ENCODE measurements at regions of chr18 and their contacts with region 1.

Region 1: DNA sequence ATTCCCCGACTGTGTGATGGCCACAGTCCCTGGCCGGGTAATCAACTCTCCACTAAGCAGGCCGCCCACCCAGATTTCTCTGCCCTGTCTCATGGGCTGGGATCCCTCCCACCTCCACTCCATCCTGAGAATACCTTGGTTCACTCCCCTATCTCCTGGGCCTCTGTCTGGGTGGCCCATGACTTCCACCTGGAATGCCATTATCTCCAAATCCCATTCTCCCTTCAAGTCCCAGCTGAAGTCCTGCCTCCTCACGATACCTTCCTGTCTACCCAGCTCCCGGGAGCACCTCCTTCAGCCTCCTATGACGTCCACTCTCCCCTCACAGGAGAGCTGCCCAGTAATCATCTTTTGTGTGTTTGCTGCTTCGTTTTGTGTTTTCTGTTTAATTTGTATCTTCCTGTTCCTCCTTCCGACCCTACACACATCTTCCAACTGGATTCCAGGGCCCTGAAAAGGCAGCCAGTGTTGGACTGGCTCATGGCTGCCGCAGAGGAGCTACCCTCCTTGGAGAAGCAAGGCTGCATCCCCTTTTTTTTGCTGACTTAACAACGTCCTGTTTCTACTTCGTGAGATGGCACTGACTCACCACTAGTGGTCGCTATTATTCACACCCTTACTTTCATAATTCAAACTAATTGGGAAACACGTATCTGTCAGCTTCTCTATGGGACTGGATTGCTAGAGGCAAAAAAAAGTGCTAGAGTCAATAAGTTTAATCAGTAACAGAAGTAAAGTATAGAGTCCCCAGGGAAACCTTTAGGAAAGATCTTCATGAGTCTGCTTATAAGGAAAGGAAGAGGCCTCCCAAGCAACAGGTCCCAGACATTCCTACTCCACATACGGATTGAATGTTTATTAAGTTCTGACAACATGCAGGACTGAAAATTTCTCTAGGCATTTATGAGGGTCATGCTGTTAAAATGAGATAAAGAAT is 171.9 kb upstream of the GATA6 start:
- DNase-seq: peak; percentile 70 to 74
- H3K4me3 ChIP-seq: no peak overlapping the region
- H3K4me3 Mint-ChIP-seq: peak overlapping the region; percentile 43
- H3K27ac Mint-ChIP-seq: peak overlapping the region; percentile 96
- H3K4me1 ChIP-seq: peaks cover 97% of the 10 kb centered on the region
- H3K4me1 Mint-ChIP-seq: peaks cover 51% of the 10 kb centered on the region
- H3K27me3 ChIP-seq: no peaks in the 10 kb centered on the region
- H3K27me3 Mint-ChIP-seq: no peaks in the 10 kb centered on the region
- CTCF ChIP-seq: peak; percentile 75 to 78

Region 2: DNA sequence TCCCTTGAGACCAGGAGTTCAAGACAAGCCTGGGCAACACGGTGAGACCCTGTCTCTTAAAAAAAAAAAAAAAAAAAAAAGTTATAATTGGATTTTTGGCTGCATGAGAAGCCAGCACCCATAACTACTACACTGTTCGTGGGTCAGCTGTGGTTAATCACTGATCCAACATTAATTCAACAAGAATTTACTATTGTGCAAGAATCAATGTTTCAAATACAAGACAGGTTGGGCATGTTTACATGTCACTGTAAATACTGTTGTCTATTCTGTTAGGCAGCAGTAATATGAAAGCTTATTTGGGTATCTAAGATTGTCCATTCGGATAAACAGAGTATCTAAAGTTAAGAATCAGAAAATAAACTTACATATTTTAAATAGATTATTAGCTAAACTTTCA is 459.2 kb before region 1 on chr18:
- CTCF ChIA-PET with region 1: no interaction called
- POLR2A ChIA-PET with region 1: no interaction called
- intact Hi-C with region 1: no loop called
- DNase-seq: no peak
- H3K4me3 ChIP-seq: no peak overlapping the region
- H3K4me3 Mint-ChIP-seq: no peak overlapping the region
- H3K27ac Mint-ChIP-seq: no peak overlapping the region
- H3K4me1 ChIP-seq: no peaks in the 10 kb centered on the region
- H3K4me1 Mint-ChIP-seq: no peaks in the 10 kb centered on the region
- H3K27me3 ChIP-seq: no peaks in the 10 kb centered on the region
- H3K27me3 Mint-ChIP-seq: no peaks in the 10 kb centered on the region
- CTCF ChIP-seq: no peak

Region 3: DNA sequence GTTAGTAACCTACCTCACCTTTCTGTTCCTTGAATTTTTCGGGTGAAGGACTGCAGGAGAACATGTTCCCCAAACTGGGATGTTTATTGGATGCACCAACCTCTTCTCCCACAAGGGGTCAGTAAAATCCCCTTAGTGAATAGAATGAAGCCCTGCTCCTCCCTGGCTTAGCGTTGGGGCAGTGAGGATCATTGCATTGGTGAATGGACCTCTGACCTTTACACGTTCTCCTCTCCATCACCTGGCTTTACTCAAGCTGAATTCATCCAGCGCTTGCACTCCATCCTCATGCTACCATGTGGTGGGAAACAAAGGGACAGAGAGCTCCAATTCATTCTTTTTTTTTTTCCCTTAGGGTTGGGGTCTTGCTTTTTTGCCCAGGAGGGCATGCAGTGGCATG is 99.7 kb before region 1 on chr18:
- CTCF ChIA-PET with region 1: no interaction called
- POLR2A ChIA-PET with region 1: no interaction called
- intact Hi-C with region 1: no loop called
- DNase-seq: peak; percentile 67 to 80
- H3K4me3 ChIP-seq: no peak overlapping the region
- H3K4me3 Mint-ChIP-seq: no peak overlapping the region
- H3K27ac Mint-ChIP-seq: no peak overlapping the region
- H3K4me1 ChIP-seq: no peaks in the 10 kb centered on the region
- H3K4me1 Mint-ChIP-seq: peaks cover 11% of the 10 kb centered on the region
- H3K27me3 ChIP-seq: no peaks in the 10 kb centered on the region
- H3K27me3 Mint-ChIP-seq: no peaks in the 10 kb centered on the region
- CTCF ChIP-seq: peak; percentile 66 to 82

Region 4: DNA sequence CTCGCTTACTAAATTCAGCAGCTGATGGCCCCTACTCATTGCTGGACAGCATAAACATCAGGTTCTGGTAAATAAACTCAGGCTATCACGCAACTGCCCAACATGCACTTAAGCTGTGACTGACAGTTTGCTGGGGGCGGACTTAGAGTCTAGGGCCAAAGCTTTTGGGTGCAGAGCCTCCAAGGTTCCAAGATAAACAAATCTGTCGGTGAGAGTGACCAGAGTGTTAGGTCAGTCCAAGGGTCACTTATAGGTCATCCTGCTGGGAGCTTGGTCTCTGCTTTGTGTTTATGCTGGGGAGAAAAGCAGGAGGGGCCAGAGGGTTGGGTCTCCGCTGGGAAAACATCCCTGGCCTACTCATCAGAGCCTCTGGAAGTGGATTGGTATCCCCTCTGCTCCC is 16.7 kb before region 1 on chr18:
- CTCF ChIA-PET with region 1: interaction called, 3 read pairs
- POLR2A ChIA-PET with region 1: interaction called, 4 read pairs
- intact Hi-C with region 1: loop called (anchors 2 kb)
- DNase-seq: peak; percentile 82 to 89
- H3K4me3 ChIP-seq: no peak overlapping the region
- H3K4me3 Mint-ChIP-seq: peak overlapping the region; percentile 66
- H3K27ac Mint-ChIP-seq: peak overlapping the region; percentile 86
- H3K4me1 ChIP-seq: peaks cover 45% of the 10 kb centered on the region
- H3K4me1 Mint-ChIP-seq: peaks cover 37% of the 10 kb centered on the region
- H3K27me3 ChIP-seq: no peaks in the 10 kb centered on the region
- H3K27me3 Mint-ChIP-seq: no peaks in the 10 kb centered on the region
- CTCF ChIP-seq: no peak

Region 5: DNA sequence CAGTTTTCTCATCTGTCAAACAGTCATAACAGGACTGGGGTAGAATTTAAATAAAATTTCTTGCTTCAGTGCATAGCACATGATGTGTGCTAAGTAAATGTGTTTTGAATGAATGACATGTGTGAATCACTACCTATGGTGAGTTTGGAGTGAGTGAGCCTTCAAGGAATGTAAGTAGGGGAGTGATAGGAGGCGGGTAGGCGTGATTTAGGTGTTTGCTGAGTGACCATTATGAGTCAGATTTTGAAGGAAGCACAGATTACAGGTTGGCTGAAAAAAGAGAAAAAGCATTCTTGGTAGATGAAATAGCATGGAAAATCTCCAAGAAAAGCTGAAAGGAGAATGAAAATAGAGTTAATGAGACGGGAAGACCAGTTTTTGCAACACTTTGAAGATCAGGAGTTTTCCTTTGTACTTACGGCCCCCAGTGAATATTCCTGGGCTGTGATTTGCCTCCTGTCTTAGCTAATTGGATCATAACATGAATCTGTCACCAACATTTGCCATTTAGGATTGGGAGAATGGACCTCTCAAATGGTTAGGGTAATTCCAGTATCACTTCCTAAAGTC is 35.0 kb after region 1 on chr18:
- CTCF ChIA-PET with region 1: interaction called, 3 read pairs
- POLR2A ChIA-PET with region 1: interaction called, 3 read pairs
- intact Hi-C with region 1: loop called (anchors 1 kb)
- DNase-seq: peak; percentile 83 to 87
- H3K4me3 ChIP-seq: no peak overlapping the region
- H3K4me3 Mint-ChIP-seq: peak overlapping the region; percentile 57
- H3K27ac Mint-ChIP-seq: peak overlapping the region; percentile 95
- H3K4me1 ChIP-seq: peaks cover 44% of the 10 kb centered on the region
- H3K4me1 Mint-ChIP-seq: peaks cover 31% of the 10 kb centered on the region
- H3K27me3 ChIP-seq: no peaks in the 10 kb centered on the region; the same call in 1 of the 2 replicates
- H3K27me3 Mint-ChIP-seq: no peaks in the 10 kb centered on the region
- CTCF ChIP-seq: no peak

Region 6: GRCh38 chr18:22060361-22060760 is 62.9 kb after region 1 on chr18:
- CTCF ChIA-PET with region 1: no interaction called
- POLR2A ChIA-PET with region 1: no interaction called
- intact Hi-C with region 1: loop called (anchors 2 kb)
- DNase-seq: no peak
- H3K4me3 ChIP-seq: no peak overlapping the region
- H3K4me3 Mint-ChIP-seq: peak overlapping the region; percentile 48
- H3K27ac Mint-ChIP-seq: peak overlapping the region; percentile 35
- H3K4me1 ChIP-seq: peaks cover 86% of the 10 kb centered on the region
- H3K4me1 Mint-ChIP-seq: peaks cover 38% of the 10 kb centered on the region
- H3K27me3 ChIP-seq: no peaks in the 10 kb centered on the region
- H3K27me3 Mint-ChIP-seq: no peaks in the 10 kb centered on the region
- CTCF ChIP-seq: no peak

Region 7: GRCh38 chr18:22169007-22169864 is 171.8 kb after region 1 on chr18 and contains the start of gene GATA6:
- CTCF ChIA-PET with region 1: interaction called, 3 read pairs
- POLR2A ChIA-PET with region 1: interaction called, 6 read pairs
- intact Hi-C with region 1: loop called (anchors 1 kb)
- DNase-seq: peak; percentile 95 to 97
- H3K4me3 ChIP-seq: peak within 1 kb of the TSS; percentile 69
- H3K4me3 Mint-ChIP-seq: peak within 1 kb of the TSS; percentile 74
- H3K27ac Mint-ChIP-seq: peak within 1 kb of the TSS; percentile 91
- H3K4me1 ChIP-seq: no peaks in the 10 kb centered on the region; the same call in 1 of the 2 replicates
- H3K4me1 Mint-ChIP-seq: peaks cover 6% of the 10 kb centered on the region
- H3K27me3 ChIP-seq: no peaks in the 10 kb centered on the region
- H3K27me3 Mint-ChIP-seq: no peaks in the 10 kb centered on the region
- CTCF ChIP-seq: peak; percentile 8 to 38
- total RNA-seq, gene GATA6: 124 and 136 TPM in 2 replicates

Region 8: GRCh38 chr18:22465859-22466457 is 468.5 kb after region 1 on chr18:
- CTCF ChIA-PET with region 1: no interaction called
- POLR2A ChIA-PET with region 1: no interaction called
- intact Hi-C with region 1: loop called (anchors 10 kb)
- DNase-seq: peak; percentile 80 to 84
- H3K4me3 ChIP-seq: no peak overlapping the region
- H3K4me3 Mint-ChIP-seq: peak overlapping the region; percentile 64
- H3K27ac Mint-ChIP-seq: peak overlapping the region; percentile 99
- H3K4me1 ChIP-seq: peaks cover 62% of the 10 kb centered on the region
- H3K4me1 Mint-ChIP-seq: peaks cover 50% of the 10 kb centered on the region
- H3K27me3 ChIP-seq: no peaks in the 10 kb centered on the region
- H3K27me3 Mint-ChIP-seq: no peaks in the 10 kb centered on the region
- CTCF ChIP-seq: no peak

Region 9: GRCh38 chr18:22563098-22563707 is 565.7 kb after region 1 on chr18:
- CTCF ChIA-PET with region 1: interaction called, 3 read pairs
- POLR2A ChIA-PET with region 1: no interaction called
- intact Hi-C with region 1: loop called (anchors 10 kb)
- DNase-seq: peak; percentile 68 to 75
- H3K4me3 ChIP-seq: no peak overlapping the region
- H3K4me3 Mint-ChIP-seq: no peak overlapping the region
- H3K27ac Mint-ChIP-seq: no peak overlapping the region
- H3K4me1 ChIP-seq: peaks cover 3% of the 10 kb centered on the region; the same call in 1 of the 2 replicates
- H3K4me1 Mint-ChIP-seq: peaks cover 9% of the 10 kb centered on the region
- H3K27me3 ChIP-seq: no peaks in the 10 kb centered on the region
- H3K27me3 Mint-ChIP-seq: no peaks in the 10 kb centered on the region
- CTCF ChIP-seq: peak; percentile 68 to 70

Measured in Caco-2 (cell line).